ENCODE measurements at regions of chr20 and their contacts with region 1.

Region 1: GRCh38 chr20:32091888-32092346 is 17.6 kb upstream of the TM9SF4 start:
- DNase-seq: peak; percentile 81
- ATAC-seq: peak; percentile 97
- H3K4me3 ChIP-seq: no peak overlapping the region
- H3K4me3 Mint-ChIP-seq: no peak overlapping the region
- H3K27ac ChIP-seq: no peak overlapping the region
- H3K27ac Mint-ChIP-seq: no peak overlapping the region
- H3K4me1 ChIP-seq: peaks cover 0 to 8% of the 10 kb centered on the region in 2 donors
- H3K4me1 Mint-ChIP-seq: peaks cover 17% of the 10 kb centered on the region
- H3K27me3 ChIP-seq: no peaks in the 10 kb centered on the region
- H3K27me3 Mint-ChIP-seq: no peaks in the 10 kb centered on the region
- CTCF ChIP-seq: peak; percentile 96

Region 2: DNA sequence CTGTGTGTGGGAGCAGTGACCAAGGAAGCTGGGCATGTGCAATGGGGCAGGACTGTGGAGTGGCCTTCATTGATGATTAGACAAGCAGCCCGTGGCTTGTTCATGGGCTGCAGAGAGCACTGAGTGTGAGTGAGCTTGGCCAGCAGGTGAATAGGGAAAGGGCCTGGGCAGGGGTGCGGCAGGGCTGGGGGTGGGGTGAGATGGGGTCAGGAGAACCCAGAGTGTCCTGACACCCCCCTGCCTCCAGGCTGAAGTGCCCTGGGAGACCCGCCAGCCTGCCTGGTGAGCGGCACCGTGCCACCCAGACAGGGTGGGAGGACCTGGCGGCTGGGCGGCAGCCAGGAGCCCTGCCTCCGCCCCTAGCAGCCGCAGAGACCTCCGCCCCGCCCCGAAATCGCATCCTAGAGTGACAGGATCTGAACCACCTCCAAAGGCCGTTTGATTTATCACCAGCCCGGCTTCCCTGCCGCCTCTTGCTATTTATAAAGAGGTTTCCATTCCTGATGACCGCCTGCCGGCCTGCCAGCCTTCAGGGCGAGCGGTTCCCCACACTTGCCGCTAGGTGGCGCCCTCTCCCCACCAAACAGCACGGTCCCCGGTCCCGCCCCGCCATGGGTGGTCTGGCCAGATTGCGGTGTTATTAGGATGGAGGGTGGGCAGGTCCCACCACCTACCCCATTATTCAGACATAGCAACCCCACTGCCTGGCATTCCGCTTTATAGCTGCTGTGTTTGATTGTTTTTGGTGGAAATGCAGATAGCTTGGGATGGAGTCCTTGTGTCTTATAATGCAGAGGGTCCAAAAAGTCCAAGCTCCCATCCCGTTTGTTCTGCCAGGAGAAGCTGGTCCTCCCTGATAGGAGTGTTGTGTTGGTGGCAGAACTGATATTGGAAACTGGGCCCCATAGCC is 269.2 kb before region 1 on chr20:
- CTCF ChIA-PET with region 1: interaction called, 38 read pairs
- POLR2A ChIA-PET with region 1: no interaction called
- intact Hi-C with region 1: loop called (anchors 1 kb)
- DNase-seq: peak; percentile 82
- ATAC-seq: peak; percentile 93
- H3K4me3 ChIP-seq: no peak overlapping the region
- H3K4me3 Mint-ChIP-seq: peak overlapping the region; percentile 27
- H3K27ac ChIP-seq: no peak overlapping the region
- H3K27ac Mint-ChIP-seq: no peak overlapping the region
- H3K4me1 ChIP-seq: peaks cover 6 to 8% of the 10 kb centered on the region in 2 donors
- H3K4me1 Mint-ChIP-seq: peaks cover 8% of the 10 kb centered on the region
- H3K27me3 ChIP-seq: peaks cover 0 to 9% (median 0%) of the 10 kb centered on the region in 4 experiments
- H3K27me3 Mint-ChIP-seq: peaks cover 8% of the 10 kb centered on the region
- CTCF ChIP-seq: peak; percentile 99

Region 3: GRCh38 chr20:31851240-31851955 is 240.5 kb before region 1 on chr20:
- CTCF ChIA-PET with region 1: interaction called, 22 read pairs
- POLR2A ChIA-PET with region 1: no interaction called
- intact Hi-C with region 1: loop called (anchors 1 kb)
- DNase-seq: no peak
- ATAC-seq: no peak
- H3K4me3 ChIP-seq: no peak overlapping the region
- H3K4me3 Mint-ChIP-seq: no peak overlapping the region
- H3K27ac ChIP-seq: no peak overlapping the region
- H3K27ac Mint-ChIP-seq: no peak overlapping the region
- H3K4me1 ChIP-seq: no peaks in the 10 kb centered on the region
- H3K4me1 Mint-ChIP-seq: no peaks in the 10 kb centered on the region
- H3K27me3 ChIP-seq: peaks cover 0 to 24% (median 2%) of the 10 kb centered on the region in 4 experiments
- H3K27me3 Mint-ChIP-seq: peaks cover 23% of the 10 kb centered on the region
- CTCF ChIP-seq: no peak

Region 4: GRCh38 chr20:31951530-31952453 is 140.1 kb before region 1 on chr20 and contains the start of gene PDRG1:
- CTCF ChIA-PET with region 1: interaction called, 24 read pairs
- POLR2A ChIA-PET with region 1: no interaction called
- intact Hi-C with region 1: loop called (anchors 1 kb)
- DNase-seq: peak; percentile 97
- ATAC-seq: peak; percentile 98
- H3K4me3 ChIP-seq: peak within 1 kb of the TSS; percentile 65 to 91 (median 86)
- H3K4me3 Mint-ChIP-seq: peak within 1 kb of the TSS; percentile 99
- H3K27ac ChIP-seq: peak within 1 kb of the TSS; percentile 56 to 88
- H3K27ac Mint-ChIP-seq: peak within 1 kb of the TSS; percentile 98
- H3K4me1 ChIP-seq: peaks cover 14 to 18% of the 10 kb centered on the region in 2 donors
- H3K4me1 Mint-ChIP-seq: peaks cover 28% of the 10 kb centered on the region
- H3K27me3 ChIP-seq: no peaks in the 10 kb centered on the region
- H3K27me3 Mint-ChIP-seq: peaks cover 18% of the 10 kb centered on the region
- CTCF ChIP-seq: peak; percentile 83
- total RNA-seq, gene PDRG1: 10.9 and 12.7 TPM in 2 replicates

Region 5: DNA sequence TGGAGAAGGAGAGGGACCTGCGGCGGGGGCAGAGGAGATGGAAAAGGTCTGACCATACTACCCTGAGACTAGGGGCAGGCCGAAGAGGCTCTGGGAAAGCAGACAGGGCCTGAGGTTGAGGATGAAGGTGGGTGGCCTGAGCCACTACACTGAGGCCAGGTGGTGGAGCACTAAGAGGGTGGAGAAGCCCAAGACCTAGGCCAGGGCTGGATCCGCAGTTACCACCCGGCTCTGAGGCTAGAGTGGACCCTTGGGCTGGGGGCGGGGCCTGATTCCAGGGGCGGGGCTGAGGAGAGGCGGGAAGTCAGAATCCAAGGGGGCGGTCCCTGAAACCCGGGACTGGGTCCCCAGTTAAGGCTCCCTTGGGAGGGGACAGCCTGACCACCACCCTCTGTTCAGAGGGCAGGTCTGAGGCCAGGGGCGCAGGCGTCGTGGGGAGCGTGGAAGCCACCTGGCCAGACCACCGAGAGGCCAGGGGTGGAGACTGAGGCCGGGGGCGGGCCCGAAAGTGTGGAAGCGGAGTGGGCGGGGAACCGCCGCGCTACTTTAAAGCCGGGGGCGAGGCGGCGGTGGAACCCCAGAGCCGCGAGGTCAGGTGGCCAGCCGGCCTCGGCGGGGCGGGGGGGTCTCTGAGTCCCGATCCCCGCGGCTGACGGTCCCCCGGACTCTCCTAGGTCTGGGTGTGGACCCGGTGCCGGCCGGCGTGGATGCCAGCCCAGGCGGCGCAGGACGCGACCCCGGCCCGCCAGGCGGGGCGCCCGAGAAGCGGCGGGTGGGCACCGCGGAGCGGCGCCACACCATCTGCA is 73.4 kb before region 1 on chr20:
- CTCF ChIA-PET with region 1: interaction called, 6 read pairs
- POLR2A ChIA-PET with region 1: no interaction called
- intact Hi-C with region 1: loop called (anchors 5 kb)
- DNase-seq: peak; percentile 60
- ATAC-seq: peak; percentile 61
- H3K4me3 ChIP-seq: peak overlapping the region in 4 of 5 experiments; percentile 41 to 69 (median 56)
- H3K4me3 Mint-ChIP-seq: peak overlapping the region; percentile 84
- H3K27ac ChIP-seq: no peak overlapping the region
- H3K27ac Mint-ChIP-seq: no peak overlapping the region
- H3K4me1 ChIP-seq: peaks cover 15 to 17% of the 10 kb centered on the region in 2 donors
- H3K4me1 Mint-ChIP-seq: peaks cover 22% of the 10 kb centered on the region
- H3K27me3 ChIP-seq: peaks cover 0 to 64% (median 30%) of the 10 kb centered on the region in 4 experiments
- H3K27me3 Mint-ChIP-seq: peaks cover 75% of the 10 kb centered on the region
- CTCF ChIP-seq: no peak

Region 6: GRCh38 chr20:32040142-32041022 is 51.5 kb before region 1 on chr20:
- CTCF ChIA-PET with region 1: interaction called, 389 read pairs
- POLR2A ChIA-PET with region 1: no interaction called
- intact Hi-C with region 1: loop called (anchors 1 kb)
- DNase-seq: peak; percentile 89
- ATAC-seq: peak; percentile 91
- H3K4me3 ChIP-seq: peak overlapping the region; percentile 18 to 54 (median 37)
- H3K4me3 Mint-ChIP-seq: peak overlapping the region; percentile 70
- H3K27ac ChIP-seq: peak overlapping the region; percentile 38 to 66
- H3K27ac Mint-ChIP-seq: peak overlapping the region; percentile 80
- H3K4me1 ChIP-seq: peaks cover 21 to 50% of the 10 kb centered on the region in 2 donors
- H3K4me1 Mint-ChIP-seq: peaks cover 54% of the 10 kb centered on the region
- H3K27me3 ChIP-seq: no peaks in the 10 kb centered on the region
- H3K27me3 Mint-ChIP-seq: no peaks in the 10 kb centered on the region
- CTCF ChIP-seq: no peak

Region 7: DNA sequence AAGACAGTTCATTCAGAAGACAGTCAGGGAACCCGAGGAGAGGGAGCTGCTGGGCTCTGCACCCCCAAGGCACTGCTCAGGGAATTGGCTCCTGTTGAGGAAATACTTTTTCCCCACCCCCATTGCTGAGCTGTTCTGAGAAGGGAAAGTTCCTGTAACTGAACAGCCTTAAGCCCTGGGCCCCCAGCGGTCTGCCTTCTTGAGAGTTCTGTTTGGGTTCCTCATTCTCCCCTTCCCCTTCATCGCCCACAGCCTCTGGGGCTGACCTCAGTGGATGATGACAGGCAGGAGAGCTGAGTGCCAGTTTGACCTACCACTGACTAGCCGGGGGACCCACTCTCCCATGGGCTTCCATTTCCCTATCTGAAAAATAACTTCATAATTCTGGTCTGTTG is 29.1 kb before region 1 on chr20:
- CTCF ChIA-PET with region 1: interaction called, 27 read pairs
- POLR2A ChIA-PET with region 1: no interaction called
- intact Hi-C with region 1: no loop called
- DNase-seq: peak; percentile 33
- ATAC-seq: peak; percentile 68
- H3K4me3 ChIP-seq: peak overlapping the region in 1 of 5 experiments; percentile 52
- H3K4me3 Mint-ChIP-seq: no peak overlapping the region
- H3K27ac ChIP-seq: peak overlapping the region in 1 of 2 donors; percentile 36
- H3K27ac Mint-ChIP-seq: peak overlapping the region; percentile 39
- H3K4me1 ChIP-seq: peaks cover 12 to 24% of the 10 kb centered on the region in 2 donors
- H3K4me1 Mint-ChIP-seq: peaks cover 39% of the 10 kb centered on the region
- H3K27me3 ChIP-seq: no peaks in the 10 kb centered on the region
- H3K27me3 Mint-ChIP-seq: no peaks in the 10 kb centered on the region
- CTCF ChIP-seq: no peak